Heart left ventricle (tissue), 16 donors: ENCODE measurements at regions of chr1 and their contacts with region 1.

Region 1: GRCh38 chr1:154198756-154199562 is 7.1 kb upstream of the TPM3 start:
- DNase-seq: peak in 1 of 5 donors; percentile 28
- ATAC-seq: peak; percentile 48 to 79 (median 68)
- H3K4me3 ChIP-seq: no peak overlapping the region
- H3K27ac ChIP-seq: peak overlapping the region in 1 of 12 donors; percentile 25
- H3K4me1 ChIP-seq: peaks cover 0 to 5% (median 0%) of the 10 kb centered on the region in 12 donors
- H3K27me3 ChIP-seq: no peaks in the 10 kb centered on the region
- CTCF ChIP-seq: peak; percentile 39 to 64 (median 56)
- POLR2A ChIP-seq: no peak

Region 2: DNA sequence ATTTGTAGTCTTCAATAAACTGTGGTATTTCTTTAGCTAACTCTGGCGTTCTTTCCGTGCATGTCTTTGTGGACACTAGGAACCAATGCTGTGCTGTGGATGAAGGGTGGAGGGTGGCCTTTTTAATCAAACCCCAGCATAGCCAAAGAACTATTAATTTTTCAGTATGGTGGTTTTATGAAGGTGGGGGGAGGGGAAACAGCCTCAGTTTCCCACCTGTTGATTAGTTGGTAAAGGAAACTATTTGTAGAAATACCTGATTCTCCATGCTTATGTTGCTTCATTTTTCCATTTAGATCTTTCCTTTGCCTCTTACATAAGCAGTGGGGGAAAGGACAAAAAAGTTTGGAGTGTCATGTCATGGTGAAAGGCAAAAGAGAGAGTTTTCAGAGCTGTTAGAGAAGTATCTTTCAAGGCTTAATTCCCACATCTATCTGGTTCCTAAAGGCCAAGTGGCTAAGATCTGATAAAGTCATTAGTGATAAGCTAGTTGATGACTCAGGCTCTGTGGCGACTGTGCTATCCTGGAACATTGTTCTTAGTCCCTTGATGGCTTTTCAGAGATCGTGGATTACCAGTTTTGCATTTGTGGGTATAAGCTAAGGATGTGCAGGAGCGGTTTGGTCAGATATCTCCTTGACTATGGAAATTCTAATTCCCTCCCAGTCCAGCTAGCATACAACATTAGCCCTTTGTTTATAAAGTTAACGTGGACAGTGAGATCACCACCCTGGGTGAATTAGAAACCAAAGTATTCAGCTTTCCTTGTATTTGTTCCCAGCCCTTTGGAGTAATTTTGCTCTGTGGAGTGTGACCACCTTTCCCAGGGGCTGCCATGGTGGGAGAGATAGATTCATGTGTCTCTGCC is 64.7 kb after region 1 on chr1:
- intact Hi-C with region 1: loop called in 2 of 10 experiments (anchors 5 to 10 kb)
- DNase-seq: no peak
- ATAC-seq: no peak
- H3K4me3 ChIP-seq: no peak overlapping the region
- H3K27ac ChIP-seq: peak overlapping the region in 3 of 12 donors; percentile 7 to 28 (median 27)
- H3K4me1 ChIP-seq: peaks cover 0 to 14% (median 0%) of the 10 kb centered on the region in 12 donors
- H3K27me3 ChIP-seq: no peaks in the 10 kb centered on the region
- CTCF ChIP-seq: no peak
- POLR2A ChIP-seq: no peak

Region 3: GRCh38 chr1:154324669-154325582 is 126.0 kb after region 1 on chr1 and contains the start of gene ATP8B2:
- intact Hi-C with region 1: loop called in 6 of 10 experiments (anchors 5 to 10 kb)
- DNase-seq: peak; percentile 70 to 86 (median 77)
- ATAC-seq: peak; percentile 43 to 63 (median 52)
- H3K4me3 ChIP-seq: peak within 1 kb of the TSS; percentile 70 to 99 (median 75)
- H3K27ac ChIP-seq: peak within 1 kb of the TSS; percentile 58 to 94 (median 88)
- H3K4me1 ChIP-seq: peaks cover 0 to 61% (median 36%) of the 10 kb centered on the region in 12 donors
- H3K27me3 ChIP-seq: peaks cover 0 to 3% (median 0%) of the 10 kb centered on the region in 9 donors
- CTCF ChIP-seq: peak; percentile 78 to 96 (median 92)
- POLR2A ChIP-seq: no peak
- total RNA-seq, gene ATP8B2: 9.4 to 45.0 (median 15.5) TPM

Region 4: GRCh38 chr1:154335025-154335714 is 136.2 kb after region 1 on chr1:
- intact Hi-C with region 1: loop called in 5 of 10 experiments (anchors 5 to 10 kb)
- DNase-seq: peak; percentile 76 to 91 (median 82)
- ATAC-seq: peak; percentile 52 to 75 (median 73)
- H3K4me3 ChIP-seq: no peak overlapping the region
- H3K27ac ChIP-seq: peak overlapping the region in 7 of 12 donors; percentile 20 to 68 (median 34)
- H3K4me1 ChIP-seq: peaks cover 0 to 36% (median 8%) of the 10 kb centered on the region in 12 donors
- H3K27me3 ChIP-seq: no peaks in the 10 kb centered on the region
- CTCF ChIP-seq: peak; percentile 78 to 94 (median 90)
- POLR2A ChIP-seq: no peak